ENCODE measurements at regions of chr10 and their contacts with region 1.

Region 1: GRCh38 chr10:21495752-21496342 is 29.6 kb downstream of the SKIDA1 start:
- DNase-seq: peak; percentile 72 to 86
- H3K4me3 ChIP-seq: peak overlapping the region; percentile 55 to 66
- H3K27ac ChIP-seq: peak overlapping the region; percentile 0 to 49
- H3K4me1 ChIP-seq: peaks cover 0 to 36% (median 31%) of the 10 kb centered on the region in 4 donors
- H3K27me3 ChIP-seq: peaks cover 0 to 39% of the 10 kb centered on the region in 2 donors
- CTCF ChIP-seq: peak; percentile 95 to 96

Region 2: DNA sequence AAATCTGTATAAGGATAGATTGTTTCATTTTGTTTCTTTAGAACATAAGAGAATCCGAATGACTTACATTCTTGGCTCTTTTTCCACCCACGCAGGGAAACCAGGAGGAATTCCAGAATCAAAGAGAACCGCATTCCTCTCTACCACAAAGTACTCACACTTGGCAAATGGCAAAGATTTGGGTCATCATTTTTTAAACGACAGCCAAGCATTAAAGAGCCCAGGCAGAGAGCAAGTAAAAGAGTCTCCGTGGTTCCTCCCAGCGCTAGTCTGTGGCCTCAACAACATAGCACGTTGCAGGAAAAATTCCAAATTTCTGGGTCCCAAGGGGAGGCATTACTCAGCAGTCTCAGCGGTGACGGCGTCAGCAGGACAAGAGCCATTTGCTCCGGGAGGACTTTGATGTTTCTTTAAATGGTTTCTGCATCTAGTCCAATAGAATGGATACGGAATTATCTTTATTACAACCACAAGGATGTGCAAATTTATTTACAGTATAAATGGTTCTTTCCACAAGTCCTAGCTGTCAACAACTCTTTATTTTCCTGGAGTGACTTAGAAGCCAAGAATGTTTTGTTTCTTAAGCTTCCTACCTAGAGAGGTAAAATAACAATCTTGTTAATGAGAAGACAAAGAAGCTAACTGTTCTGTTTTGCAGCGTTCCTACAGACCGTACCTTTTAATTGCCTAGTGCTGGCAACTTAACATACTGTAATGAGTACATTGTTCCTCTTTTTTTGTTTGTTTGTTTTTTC is 202.9 kb before region 1 on chr10:
- intact Hi-C with region 1: loop called (anchors 10 kb)
- DNase-seq: peak; percentile 80 to 87
- H3K4me3 ChIP-seq: peak overlapping the region; percentile 21 to 35
- H3K27ac ChIP-seq: peak overlapping the region in 1 of 2 donors; percentile 32
- H3K4me1 ChIP-seq: peaks cover 0 to 14% (median 6%) of the 10 kb centered on the region in 4 donors
- H3K27me3 ChIP-seq: no peaks in the 10 kb centered on the region
- CTCF ChIP-seq: no peak

Region 3: GRCh38 chr10:21572578-21572977 is 76.7 kb after region 1 on chr10:
- intact Hi-C with region 1: no loop called
- DNase-seq: peak; percentile 71 to 76
- H3K4me3 ChIP-seq: no peak overlapping the region
- H3K27ac ChIP-seq: peak overlapping the region in 1 of 2 donors; percentile 2
- H3K4me1 ChIP-seq: peaks cover 0 to 30% (median 12%) of the 10 kb centered on the region in 4 donors
- H3K27me3 ChIP-seq: no peaks in the 10 kb centered on the region
- CTCF ChIP-seq: no peak

Region 4: GRCh38 chr10:21732067-21732772 is 236.4 kb after region 1 on chr10:
- intact Hi-C with region 1: loop called (anchors 2 kb)
- DNase-seq: no peak
- H3K4me3 ChIP-seq: no peak overlapping the region
- H3K27ac ChIP-seq: no peak overlapping the region
- H3K4me1 ChIP-seq: no peaks in the 10 kb centered on the region
- H3K27me3 ChIP-seq: no peaks in the 10 kb centered on the region
- CTCF ChIP-seq: peak; percentile 67 to 68

Region 5: DNA sequence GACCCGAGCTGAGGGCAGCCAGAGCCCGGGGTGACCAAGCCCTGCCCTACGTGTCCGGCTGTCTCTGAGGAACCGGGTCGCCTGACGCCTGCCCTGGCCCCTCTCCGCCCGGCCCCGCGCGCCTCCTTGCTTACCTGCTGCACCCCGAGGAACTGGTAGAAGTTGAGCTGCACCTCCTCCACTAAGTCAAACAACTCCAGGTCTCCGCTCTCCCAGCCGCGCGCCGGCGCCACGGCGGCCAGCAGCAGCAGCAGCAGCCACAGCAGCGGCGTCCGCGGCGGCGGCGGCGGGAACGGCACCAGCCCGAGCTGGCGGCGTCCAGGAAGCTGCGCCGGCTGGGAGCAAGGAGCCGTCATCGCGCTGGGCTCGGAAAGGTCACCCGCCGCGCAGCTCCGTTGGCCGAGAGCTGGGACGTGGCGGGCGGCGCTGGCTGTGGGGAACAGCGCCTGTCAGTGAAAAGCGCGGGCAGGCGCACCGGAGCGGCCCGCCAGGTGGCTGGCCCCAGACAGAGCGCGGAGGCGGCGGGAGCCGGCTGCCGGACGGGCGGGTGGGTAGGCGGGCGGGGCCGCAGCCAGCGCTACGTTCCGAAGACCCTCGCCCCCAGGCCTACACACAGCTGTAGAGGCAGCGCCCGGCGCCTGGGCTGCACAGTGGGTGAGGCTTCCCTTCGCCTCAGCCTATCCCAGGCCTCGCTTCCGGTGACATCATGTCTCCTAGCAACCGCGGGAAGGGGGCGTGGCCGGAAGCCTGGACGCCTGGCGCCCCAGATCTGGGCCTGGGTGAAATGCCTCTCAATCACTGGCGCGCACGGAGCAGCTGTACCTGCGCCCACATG is 507.4 kb after region 1 on chr10 and contains the start of gene DNAJC1:
- intact Hi-C with region 1: loop called (anchors 10 kb)
- DNase-seq: peak; percentile 97 to 98
- H3K4me3 ChIP-seq: peak within 1 kb of the TSS; percentile 82 to 91
- H3K27ac ChIP-seq: peak within 1 kb of the TSS; percentile 92 to 93
- H3K4me1 ChIP-seq: peaks cover 0 to 9% (median 5%) of the 10 kb centered on the region in 4 donors
- H3K27me3 ChIP-seq: no peaks in the 10 kb centered on the region
- CTCF ChIP-seq: peak in 1 of 2 experiments; percentile 28

Region 6: GRCh38 chr10:22997102-22997501 is 1501.3 kb after region 1 on chr10:
- intact Hi-C with region 1: loop called (anchors 10 kb)
- DNase-seq: no peak
- H3K4me3 ChIP-seq: no peak overlapping the region
- H3K27ac ChIP-seq: no peak overlapping the region
- H3K4me1 ChIP-seq: no peaks in the 10 kb centered on the region
- H3K27me3 ChIP-seq: peaks cover 0 to 14% of the 10 kb centered on the region in 2 donors
- CTCF ChIP-seq: no peak

Measured in tibial artery (tissue), 4 donors.